Activated CD4-positive, alpha-beta T cell treated with anti-CD3 and anti-CD28 coated beads, Interleukin-2, amount 10 ng/mL, durations not matched to agents 24 days and 14 days (primary cell): ENCODE measurements at regions of chr12 and their contacts with region 1.

Region 1: DNA sequence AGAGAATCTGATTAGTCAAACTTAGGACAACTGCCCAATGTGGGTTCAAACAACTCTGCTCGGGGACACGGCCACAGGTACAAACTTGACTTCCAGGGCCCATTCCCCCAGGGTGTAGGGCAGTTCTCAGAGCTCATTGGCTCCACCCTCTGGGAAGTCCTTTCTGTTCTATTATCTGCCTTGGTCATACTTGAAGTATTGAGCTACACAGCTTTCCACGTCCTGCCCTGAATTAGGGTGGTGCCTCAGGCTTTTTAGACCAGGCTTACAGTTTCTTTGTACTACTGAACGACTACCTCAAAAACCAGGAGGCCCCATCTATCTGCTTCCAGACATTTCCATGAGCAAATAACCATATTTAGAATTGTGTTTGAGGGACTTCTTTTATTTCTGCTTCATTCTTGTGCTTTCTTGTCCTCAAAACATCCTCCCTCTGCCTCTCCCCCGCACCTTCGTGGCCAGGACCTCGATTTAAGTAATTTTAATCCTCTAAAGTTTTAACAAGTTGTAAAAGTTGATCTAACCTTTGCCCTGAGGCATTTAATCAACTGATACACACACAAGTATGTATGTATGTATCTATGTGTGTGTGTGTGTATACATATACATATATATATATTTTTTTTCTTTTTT is 281.7 kb upstream of the AMIGO2 start:
- DNase-seq: peak; percentile 88
- H3K4me3 Mint-ChIP-seq: peak overlapping the region; percentile 81
- H3K27ac Mint-ChIP-seq: peak overlapping the region; percentile 98
- H3K4me1 Mint-ChIP-seq: peaks cover 53% of the 10 kb centered on the region
- H3K27me3 Mint-ChIP-seq: no peaks in the 10 kb centered on the region

Region 2: GRCh38 chr12:47190271-47190750 is 171.2 kb before region 1 on chr12:
- intact Hi-C with region 1: no loop called
- DNase-seq: no peak
- H3K4me3 Mint-ChIP-seq: peak overlapping the region; percentile 66
- H3K27ac Mint-ChIP-seq: peak overlapping the region; percentile 81
- H3K4me1 Mint-ChIP-seq: peaks cover 63% of the 10 kb centered on the region
- H3K27me3 Mint-ChIP-seq: no peaks in the 10 kb centered on the region

Region 3: GRCh38 chr12:47307680-47308399 is 53.7 kb before region 1 on chr12:
- intact Hi-C with region 1: loop called (anchors 2 kb)
- DNase-seq: peak; percentile 88
- H3K4me3 Mint-ChIP-seq: peak overlapping the region; percentile 88
- H3K27ac Mint-ChIP-seq: peak overlapping the region; percentile 88
- H3K4me1 Mint-ChIP-seq: peaks cover 51% of the 10 kb centered on the region
- H3K27me3 Mint-ChIP-seq: no peaks in the 10 kb centered on the region

Region 4: GRCh38 chr12:47350062-47350408 is 11.5 kb before region 1 on chr12:
- intact Hi-C with region 1: loop called (anchors 2 kb)
- DNase-seq: no peak
- H3K4me3 Mint-ChIP-seq: peak overlapping the region; percentile 78
- H3K27ac Mint-ChIP-seq: peak overlapping the region; percentile 99
- H3K4me1 Mint-ChIP-seq: peaks cover 58% of the 10 kb centered on the region
- H3K27me3 Mint-ChIP-seq: no peaks in the 10 kb centered on the region

Region 5: GRCh38 chr12:47377414-47378221 is 16.1 kb after region 1 on chr12:
- intact Hi-C with region 1: loop called (anchors 2 kb)
- DNase-seq: peak; percentile 53
- H3K4me3 Mint-ChIP-seq: no peak overlapping the region
- H3K27ac Mint-ChIP-seq: peak overlapping the region; percentile 45
- H3K4me1 Mint-ChIP-seq: peaks cover 35% of the 10 kb centered on the region
- H3K27me3 Mint-ChIP-seq: no peaks in the 10 kb centered on the region

Region 6: GRCh38 chr12:47391566-47391965 is 30.1 kb after region 1 on chr12:
- intact Hi-C with region 1: loop called (anchors 1 kb)
- DNase-seq: peak; percentile 88
- H3K4me3 Mint-ChIP-seq: peak overlapping the region; percentile 81
- H3K27ac Mint-ChIP-seq: peak overlapping the region; percentile 99
- H3K4me1 Mint-ChIP-seq: peaks cover 77% of the 10 kb centered on the region
- H3K27me3 Mint-ChIP-seq: no peaks in the 10 kb centered on the region